Sigmoid colon (tissue), 7 donors: ENCODE measurements at regions of chr22 and their contacts with region 1.

Region 1: DNA sequence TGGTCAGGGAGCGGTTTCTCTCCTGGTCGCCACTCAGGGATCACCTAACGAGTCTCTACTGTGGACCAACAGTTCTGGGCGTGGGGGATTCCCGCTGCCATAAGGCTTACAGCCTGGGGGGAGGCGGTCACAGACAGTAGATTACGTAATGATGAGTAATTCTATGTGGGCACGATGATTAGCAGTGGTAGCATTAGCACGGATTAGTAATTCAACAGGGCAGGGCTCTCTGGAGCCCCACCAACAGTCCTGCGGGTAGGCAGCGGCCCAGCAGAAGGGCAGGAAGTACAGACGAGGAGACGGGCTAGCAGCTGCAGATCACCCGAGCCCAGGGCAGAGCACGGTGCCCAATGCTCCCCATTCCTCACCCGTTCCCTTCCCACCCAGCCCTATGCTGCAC is 3.6 kb downstream of the SHISAL1 start:
- DNase-seq: peak; percentile 84
- H3K4me3 ChIP-seq: peak overlapping the region in 1 of 4 donors; percentile 49
- H3K27ac ChIP-seq: peak overlapping the region; percentile 79 to 98 (median 92)
- H3K4me1 ChIP-seq: peaks cover 0 to 100% (median 96%) of the 10 kb centered on the region in 4 donors
- H3K27me3 ChIP-seq: no peaks in the 10 kb centered on the region
- CTCF ChIP-seq: no peak
- EP300 ChIP-seq: no peak
- POLR2A ChIP-seq: no peak

Region 2: DNA sequence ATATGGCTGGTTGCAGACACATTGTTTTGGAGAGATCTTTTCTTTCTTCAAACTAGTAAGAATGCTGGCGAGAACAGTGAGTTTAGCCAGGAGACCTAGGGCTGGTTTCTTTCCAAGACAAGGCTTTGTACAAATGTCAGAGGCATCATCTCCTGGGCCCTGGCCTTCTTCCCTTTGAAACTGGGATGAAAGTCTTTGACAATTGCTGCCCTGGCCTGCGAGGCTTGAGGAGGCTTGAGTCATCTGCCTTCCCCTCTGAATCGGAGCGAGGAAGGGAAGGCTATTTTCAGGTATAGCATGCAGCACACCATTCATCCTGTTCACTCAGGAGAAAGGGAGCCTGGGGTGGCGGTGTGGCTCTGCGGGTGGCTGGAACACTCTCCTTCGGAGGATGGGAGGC is 149.9 kb before region 1 on chr22:
- intact Hi-C with region 1: loop called (anchors 2 kb)
- DNase-seq: peak; percentile 92
- H3K4me3 ChIP-seq: no peak overlapping the region
- H3K27ac ChIP-seq: peak overlapping the region; percentile 49 to 86 (median 82)
- H3K4me1 ChIP-seq: peaks cover 0 to 50% (median 39%) of the 10 kb centered on the region in 4 donors
- H3K27me3 ChIP-seq: no peaks in the 10 kb centered on the region
- CTCF ChIP-seq: no peak
- EP300 ChIP-seq: peak in 3 of 4 donors; percentile 64 to 90 (median 81)
- POLR2A ChIP-seq: no peak

Region 3: DNA sequence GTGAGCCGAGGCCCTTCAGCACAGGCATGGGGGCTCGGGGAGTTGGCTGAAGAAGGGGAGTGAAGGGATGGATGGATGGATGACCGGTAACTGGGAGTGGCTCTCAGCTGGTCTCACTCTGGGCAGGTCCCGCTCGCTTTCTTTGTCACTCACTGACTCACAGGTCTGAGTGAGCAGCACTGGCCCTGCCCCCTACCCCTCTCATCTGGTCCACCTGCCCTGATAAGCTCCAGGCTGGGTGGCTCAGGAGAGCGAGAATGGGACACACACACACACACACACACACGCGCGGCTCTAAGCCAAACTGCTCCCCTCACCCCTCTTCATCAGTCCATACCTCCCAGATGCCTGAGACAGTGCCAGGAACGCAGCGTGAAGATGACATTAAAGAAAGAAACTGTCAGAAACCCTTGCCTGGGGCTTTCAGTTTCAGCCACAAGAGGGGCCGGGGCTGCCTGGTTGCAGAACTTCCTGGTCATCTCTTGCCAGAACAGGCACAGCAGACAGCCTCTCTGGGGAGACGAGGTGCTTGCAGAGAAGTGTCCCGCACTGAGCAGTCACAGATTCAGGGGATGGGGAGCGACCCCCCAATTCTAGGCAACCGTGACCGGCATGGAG is 20.2 kb after region 1 on chr22:
- intact Hi-C with region 1: loop called (anchors 2 kb)
- DNase-seq: peak; percentile 64
- H3K4me3 ChIP-seq: no peak overlapping the region
- H3K27ac ChIP-seq: peak overlapping the region in 2 of 4 donors; percentile 65 to 68
- H3K4me1 ChIP-seq: peaks cover 0 to 52% (median 39%) of the 10 kb centered on the region in 4 donors
- H3K27me3 ChIP-seq: peaks cover 0 to 4% (median 3%) of the 10 kb centered on the region in 3 donors
- CTCF ChIP-seq: no peak
- EP300 ChIP-seq: no peak
- POLR2A ChIP-seq: no peak

Region 4: GRCh38 chr22:44363272-44363979 is 54.3 kb after region 1 on chr22:
- intact Hi-C with region 1: loop called (anchors 2 kb)
- DNase-seq: peak; percentile 97
- H3K4me3 ChIP-seq: no peak overlapping the region
- H3K27ac ChIP-seq: peak overlapping the region; percentile 82 to 87 (median 86)
- H3K4me1 ChIP-seq: peaks cover 0 to 68% (median 59%) of the 10 kb centered on the region in 4 donors
- H3K27me3 ChIP-seq: no peaks in the 10 kb centered on the region
- CTCF ChIP-seq: no peak
- EP300 ChIP-seq: peak; percentile 37 to 89 (median 77)
- POLR2A ChIP-seq: no peak

Region 5: DNA sequence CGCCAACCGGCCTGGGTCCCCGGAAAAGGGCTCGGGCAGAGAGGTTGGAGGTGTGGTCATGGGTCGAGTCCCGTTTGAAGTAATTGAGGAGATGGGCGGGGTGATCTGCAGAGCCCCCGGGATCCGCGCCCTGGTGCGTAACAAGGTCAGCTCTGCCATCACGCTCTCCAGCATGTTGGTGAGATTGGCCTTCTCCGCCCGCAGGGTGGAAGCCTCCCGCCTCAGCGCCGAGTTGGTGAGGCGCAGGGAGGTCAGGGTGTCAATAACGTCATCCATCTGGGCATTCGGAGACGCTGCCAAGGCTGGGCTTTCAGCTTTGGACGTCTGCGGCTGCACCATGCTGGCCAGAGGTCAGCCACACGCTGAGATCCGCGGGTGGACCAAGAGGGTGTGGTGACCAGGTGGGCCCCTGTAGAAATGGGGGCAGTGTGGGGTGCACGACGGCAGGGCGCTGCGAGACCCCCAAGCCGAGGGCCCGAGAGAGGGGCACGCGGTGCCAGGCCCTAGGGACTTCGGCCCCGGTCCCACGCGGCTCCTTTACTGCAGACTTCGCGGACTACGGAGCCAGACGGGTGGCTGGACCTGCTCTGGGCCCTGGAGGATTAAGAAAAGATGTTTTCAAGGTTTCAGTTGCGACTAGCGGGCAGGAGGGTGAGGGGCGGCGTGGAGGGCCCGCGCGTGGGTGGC is 188.2 kb after region 1 on chr22:
- intact Hi-C with region 1: loop called (anchors 5 kb)
- DNase-seq: peak; percentile 72
- H3K4me3 ChIP-seq: peak overlapping the region; percentile 58 to 94 (median 72)
- H3K27ac ChIP-seq: peak overlapping the region; percentile 83 to 88 (median 83)
- H3K4me1 ChIP-seq: peaks cover 0 to 43% (median 26%) of the 10 kb centered on the region in 4 donors
- H3K27me3 ChIP-seq: no peaks in the 10 kb centered on the region
- CTCF ChIP-seq: no peak
- EP300 ChIP-seq: no peak
- POLR2A ChIP-seq: no peak